Activated CD4-positive, alpha-beta memory T cell treated with anti-CD3 and anti-CD28 coated beads for 36 hours (primary cell): ENCODE measurements at regions of chr3 and their contacts with region 1.

Region 1: GRCh38 chr3:189324538-189325138 is 152.9 kb downstream of the TPRG1 start:
- DNase-seq: peak; percentile 93
- H3K4me3 Mint-ChIP-seq: peak overlapping the region; percentile 46
- H3K27ac Mint-ChIP-seq: peak overlapping the region; percentile 93
- H3K4me1 Mint-ChIP-seq: peaks cover 58% of the 10 kb centered on the region
- H3K27me3 Mint-ChIP-seq: no peaks in the 10 kb centered on the region

Region 2: GRCh38 chr3:188526057-188526456 is 798.6 kb before region 1 on chr3:
- CTCF ChIA-PET with region 1: no interaction called
- POLR2A ChIA-PET with region 1: no interaction called
- intact Hi-C with region 1: no loop called
- DNase-seq: no peak
- H3K4me3 Mint-ChIP-seq: no peak overlapping the region
- H3K27ac Mint-ChIP-seq: no peak overlapping the region
- H3K4me1 Mint-ChIP-seq: no peaks in the 10 kb centered on the region
- H3K27me3 Mint-ChIP-seq: no peaks in the 10 kb centered on the region

Region 3: DNA sequence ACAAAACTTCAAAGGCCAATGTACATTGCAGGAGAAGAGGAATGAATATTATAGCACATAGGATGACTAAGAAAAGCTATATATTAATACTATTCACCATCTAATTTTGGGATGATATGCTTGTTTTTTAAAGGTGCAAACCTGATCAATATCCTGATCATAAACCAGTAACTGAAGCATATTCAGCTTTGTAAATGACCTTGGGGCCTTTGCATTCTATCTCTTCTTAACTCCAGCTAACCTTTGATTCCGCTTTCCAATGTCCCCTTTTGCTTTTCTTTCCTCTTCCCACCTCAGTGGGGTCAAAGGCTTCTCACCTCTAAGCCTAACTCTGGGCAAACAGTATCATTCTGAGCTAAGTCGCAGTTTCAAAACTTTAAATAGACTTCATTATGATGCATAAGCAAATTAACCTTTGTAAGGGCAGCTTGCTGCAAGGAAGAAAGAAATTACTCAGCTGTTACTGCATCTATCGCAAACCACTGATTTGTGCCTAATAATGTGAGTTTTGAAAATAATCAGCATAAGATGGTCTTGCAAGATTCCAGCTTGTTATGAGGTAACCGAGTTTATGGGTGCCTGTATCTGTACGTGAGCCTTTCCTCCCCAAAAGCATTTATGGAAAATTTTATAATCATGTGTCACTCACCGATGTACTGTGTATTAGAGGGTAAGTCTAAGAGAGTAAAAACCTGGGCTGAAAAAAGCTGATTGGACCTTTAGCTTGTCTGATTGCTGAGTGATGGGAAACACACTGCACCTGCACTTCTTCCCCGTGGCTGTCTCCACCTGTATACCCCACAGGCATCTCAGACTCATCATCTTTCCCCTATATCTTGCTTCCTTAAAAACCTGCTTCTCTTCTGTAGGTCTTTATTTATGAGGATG is 36.0 kb before region 1 on chr3:
- CTCF ChIA-PET with region 1: interaction called, 4 read pairs
- POLR2A ChIA-PET with region 1: interaction called, 3 read pairs
- intact Hi-C with region 1: loop called (anchors 2 kb)
- DNase-seq: no peak
- H3K4me3 Mint-ChIP-seq: no peak overlapping the region
- H3K27ac Mint-ChIP-seq: peak overlapping the region; percentile 33
- H3K4me1 Mint-ChIP-seq: peaks cover 33% of the 10 kb centered on the region
- H3K27me3 Mint-ChIP-seq: no peaks in the 10 kb centered on the region

Region 4: DNA sequence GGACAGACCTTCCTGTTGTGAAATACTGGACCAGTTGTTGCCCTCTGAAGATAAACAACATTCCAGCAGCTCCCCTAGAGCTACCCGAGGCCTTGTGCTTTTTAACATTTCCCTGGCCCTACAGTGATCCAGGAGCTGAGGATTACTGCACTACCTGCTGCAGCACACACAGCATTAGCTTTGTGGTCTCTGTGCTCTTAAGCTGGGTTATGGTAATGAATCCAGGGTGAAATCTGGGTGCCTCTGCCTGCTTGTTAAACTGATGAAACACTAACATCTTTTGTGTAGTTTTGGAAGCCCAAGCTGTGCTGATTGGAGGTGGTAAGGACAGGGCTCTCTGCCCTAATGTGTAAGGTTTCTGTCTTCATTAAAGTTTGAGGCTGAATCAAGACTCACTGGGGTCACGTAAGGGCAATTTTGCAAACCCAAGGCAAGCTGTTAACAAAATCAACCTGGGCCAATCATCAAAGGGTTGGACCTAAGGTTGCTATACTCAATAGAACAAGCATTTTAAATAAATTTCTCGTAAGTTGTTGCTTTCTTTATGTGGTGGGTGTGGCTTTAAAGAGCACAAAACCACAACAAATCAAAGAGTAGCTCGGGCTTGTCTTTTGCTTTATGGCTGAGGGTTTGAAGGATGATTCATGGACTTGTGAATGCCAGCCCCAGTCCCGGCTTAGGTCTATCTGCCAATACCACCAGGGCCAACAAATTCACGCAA is 31.0 kb after region 1 on chr3:
- CTCF ChIA-PET with region 1: no interaction called
- POLR2A ChIA-PET with region 1: interaction called, 3 read pairs
- intact Hi-C with region 1: loop called (anchors 2 kb)
- DNase-seq: peak; percentile 46
- H3K4me3 Mint-ChIP-seq: peak overlapping the region; percentile 48
- H3K27ac Mint-ChIP-seq: peak overlapping the region; percentile 62
- H3K4me1 Mint-ChIP-seq: peaks cover 19% of the 10 kb centered on the region
- H3K27me3 Mint-ChIP-seq: no peaks in the 10 kb centered on the region

Region 5: GRCh38 chr3:189570916-189571315 is 246.3 kb after region 1 on chr3:
- CTCF ChIA-PET with region 1: no interaction called
- POLR2A ChIA-PET with region 1: no interaction called
- intact Hi-C with region 1: loop called (anchors 2 kb)
- DNase-seq: no peak
- H3K4me3 Mint-ChIP-seq: no peak overlapping the region
- H3K27ac Mint-ChIP-seq: no peak overlapping the region
- H3K4me1 Mint-ChIP-seq: peaks cover 16% of the 10 kb centered on the region
- H3K27me3 Mint-ChIP-seq: peaks cover 1% of the 10 kb centered on the region

Region 6: DNA sequence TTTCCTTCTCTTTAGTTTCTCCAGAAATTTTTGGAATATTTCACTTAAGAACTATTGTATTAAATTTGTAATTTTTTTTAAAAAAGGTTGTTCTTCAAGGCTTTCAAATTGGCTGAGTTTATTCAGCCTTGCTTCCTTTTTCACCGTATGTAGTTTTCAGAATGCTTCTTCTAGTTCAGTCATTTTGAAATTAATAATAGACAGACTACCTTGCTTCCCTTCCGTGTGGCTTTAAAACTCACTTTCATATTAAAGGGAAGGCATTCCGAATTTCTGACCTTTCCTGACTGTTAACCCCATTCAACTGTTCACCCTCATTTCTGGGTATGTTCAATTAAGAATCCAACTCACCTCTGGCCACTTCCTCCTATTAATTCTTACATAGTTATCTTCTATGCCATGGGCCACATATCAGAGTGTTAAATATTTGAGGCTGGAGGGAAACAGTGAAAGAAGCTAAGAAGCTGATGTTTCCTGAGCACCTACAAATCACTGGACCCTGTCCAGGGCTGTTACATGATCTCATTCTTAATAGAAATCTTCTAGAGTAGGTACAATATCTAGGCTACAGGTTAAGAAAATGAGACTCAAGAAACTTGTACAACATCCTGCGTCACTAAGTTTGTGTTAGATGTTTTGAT is 558.6 kb after region 1 on chr3:
- CTCF ChIA-PET with region 1: no interaction called
- POLR2A ChIA-PET with region 1: no interaction called
- intact Hi-C with region 1: no loop called
- DNase-seq: no peak
- H3K4me3 Mint-ChIP-seq: no peak overlapping the region
- H3K27ac Mint-ChIP-seq: no peak overlapping the region
- H3K4me1 Mint-ChIP-seq: no peaks in the 10 kb centered on the region
- H3K27me3 Mint-ChIP-seq: peaks cover 7% of the 10 kb centered on the region

Region 7: GRCh38 chr3:190491533-190492054 is 1167.0 kb after region 1 on chr3:
- CTCF ChIA-PET with region 1: no interaction called
- POLR2A ChIA-PET with region 1: no interaction called
- intact Hi-C with region 1: loop called (anchors 10 kb)
- DNase-seq: peak; percentile 37
- H3K4me3 Mint-ChIP-seq: no peak overlapping the region
- H3K27ac Mint-ChIP-seq: no peak overlapping the region
- H3K4me1 Mint-ChIP-seq: peaks cover 17% of the 10 kb centered on the region
- H3K27me3 Mint-ChIP-seq: peaks cover 57% of the 10 kb centered on the region